Spleen (tissue), 13 donors: ENCODE measurements at regions of chr5 and their contacts with region 1.

Region 1: GRCh38 chr5:169980418-169981053 is at the start of gene INSYN2B:
- DNase-seq: no peak
- H3K4me3 ChIP-seq: peak within 1 kb of the TSS in 7 of 8 donors; percentile 3 to 42 (median 22)
- H3K27ac ChIP-seq: no peak within 1 kb of the TSS
- H3K4me1 ChIP-seq: peaks cover 0 to 16% (median 7%) of the 10 kb centered on the region in 6 donors
- H3K27me3 ChIP-seq: no peaks in the 10 kb centered on the region
- CTCF ChIP-seq: peak in 9 of 11 experiments; percentile 4 to 75 (median 55)
- POLR2A ChIP-seq: no peak
- total RNA-seq, gene INSYN2B: 0.34 to 5.5 (median 2.0) TPM

Region 2: GRCh38 chr5:169450464-169450863 is 530.1 kb before region 1 on chr5:
- intact Hi-C with region 1: no loop called
- DNase-seq: no peak
- H3K4me3 ChIP-seq: no peak overlapping the region
- H3K27ac ChIP-seq: no peak overlapping the region
- H3K4me1 ChIP-seq: no peaks in the 10 kb centered on the region
- H3K27me3 ChIP-seq: no peaks in the 10 kb centered on the region
- CTCF ChIP-seq: no peak
- POLR2A ChIP-seq: no peak

Region 3: DNA sequence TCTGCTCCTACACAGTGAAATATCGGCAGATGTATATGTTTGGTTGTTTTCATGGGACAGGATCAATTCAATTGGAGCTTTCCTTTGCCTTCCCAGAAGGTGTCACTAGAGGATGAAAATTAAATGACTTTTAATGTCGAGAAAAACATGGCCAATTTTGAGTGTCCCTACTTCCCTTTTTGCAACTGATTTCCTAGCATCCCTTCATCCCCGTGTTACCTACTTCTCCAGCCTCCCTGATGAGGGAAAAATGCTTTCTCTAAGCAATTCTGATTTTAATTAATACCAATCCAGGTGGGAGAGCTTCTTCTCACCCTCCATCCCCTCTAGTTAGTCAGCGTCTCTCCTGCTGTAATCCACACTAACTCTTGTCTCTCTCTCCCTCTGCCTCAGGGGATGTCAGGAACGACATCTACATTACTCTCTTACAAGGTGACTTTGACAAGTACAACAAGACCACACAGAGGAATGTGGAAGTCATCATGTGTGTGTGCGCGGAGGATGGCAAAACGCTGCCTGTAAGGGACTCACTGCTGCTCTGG is 278.6 kb before region 1 on chr5:
- intact Hi-C with region 1: loop called (anchors 5 kb)
- DNase-seq: no peak
- H3K4me3 ChIP-seq: no peak overlapping the region
- H3K27ac ChIP-seq: peak overlapping the region in 1 of 8 donors; percentile 46
- H3K4me1 ChIP-seq: peaks cover 0 to 8% (median 0%) of the 10 kb centered on the region in 6 donors
- H3K27me3 ChIP-seq: no peaks in the 10 kb centered on the region
- CTCF ChIP-seq: peak in 8 of 11 experiments; percentile 16 to 58 (median 44)
- POLR2A ChIP-seq: no peak